Posterior vena cava (tissue), 2 donors: ENCODE measurements at regions of chr10 and their contacts with region 1.

Region 1: DNA sequence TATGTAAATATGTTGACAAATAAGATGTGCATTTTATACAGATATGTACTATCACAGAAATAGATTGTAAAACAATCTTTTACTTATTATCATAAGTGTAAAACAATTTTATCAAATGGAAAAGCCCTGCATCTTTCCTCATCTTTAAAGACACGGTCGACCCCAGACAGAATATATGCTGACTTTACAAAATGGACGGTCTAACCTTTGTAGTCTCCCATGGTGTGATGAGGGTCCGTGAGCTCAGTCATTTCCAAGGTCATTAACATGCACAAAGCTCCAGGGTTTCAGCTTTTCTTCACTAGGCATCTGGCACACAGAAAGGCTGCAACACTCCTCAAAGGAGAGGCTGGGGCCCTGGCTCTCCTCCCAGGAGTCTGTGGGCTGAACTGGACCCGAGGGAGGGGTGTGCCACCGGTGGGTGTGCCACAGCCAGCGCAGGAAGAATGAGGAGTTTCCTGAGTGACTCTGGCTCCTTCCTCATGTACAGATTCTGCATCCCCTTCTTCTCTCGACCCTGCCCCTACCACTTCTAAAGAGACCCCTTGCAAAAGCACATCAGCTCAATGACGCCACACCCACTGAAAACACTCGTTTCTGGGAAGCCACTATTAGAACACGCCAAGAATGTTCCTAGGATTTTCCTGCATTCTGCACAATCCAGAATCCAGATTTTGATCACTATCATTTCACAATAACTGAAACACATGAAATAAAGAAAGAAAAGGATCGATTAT is 26.2 kb upstream of the ABLIM1 start:
- DNase-seq: peak; percentile 81

Region 2: GRCh38 chr10:114304017-114304570 is 380.2 kb before region 1 on chr10:
- intact Hi-C with region 1: no loop called
- DNase-seq: peak; percentile 89

Region 3: DNA sequence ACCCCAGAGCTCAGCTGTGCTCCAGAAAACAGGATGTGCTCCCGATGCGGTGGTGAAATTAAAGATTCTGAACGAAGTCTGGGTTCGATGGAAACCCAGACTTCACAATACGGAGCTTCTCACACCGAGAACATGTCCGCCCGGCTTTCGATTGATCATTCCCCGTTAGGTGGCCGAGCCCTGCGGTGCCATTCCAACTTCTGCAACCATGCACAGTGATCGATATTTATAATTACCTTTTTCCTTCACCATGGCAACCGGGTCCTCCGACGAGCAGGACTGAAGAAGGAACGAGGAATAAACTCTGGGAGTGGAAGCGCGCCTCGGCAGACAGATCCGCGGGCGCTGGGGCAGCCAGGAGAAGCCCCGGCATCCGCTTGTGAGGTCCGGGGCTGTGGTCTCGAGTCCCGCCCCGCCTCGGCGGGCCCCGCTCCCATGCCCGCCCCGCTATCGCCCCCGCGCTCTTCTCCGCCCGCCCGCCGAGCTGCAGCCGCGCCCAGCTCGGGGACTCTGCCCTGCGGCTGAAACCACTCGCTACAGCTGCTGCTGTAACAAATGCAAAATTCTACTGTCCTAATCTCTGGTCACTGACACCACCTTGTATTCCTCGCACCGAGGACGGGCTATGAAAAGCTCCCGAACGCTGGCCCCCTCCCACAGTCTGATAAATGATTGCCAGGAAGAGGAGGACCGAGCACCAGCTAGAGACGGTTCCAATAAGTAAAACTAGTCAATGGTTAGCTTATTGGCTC is 52.4 kb before region 1 on chr10:
- intact Hi-C with region 1: loop called in 1 of 2 experiments (anchors 10 kb)
- DNase-seq: peak; percentile 82

Region 4: DNA sequence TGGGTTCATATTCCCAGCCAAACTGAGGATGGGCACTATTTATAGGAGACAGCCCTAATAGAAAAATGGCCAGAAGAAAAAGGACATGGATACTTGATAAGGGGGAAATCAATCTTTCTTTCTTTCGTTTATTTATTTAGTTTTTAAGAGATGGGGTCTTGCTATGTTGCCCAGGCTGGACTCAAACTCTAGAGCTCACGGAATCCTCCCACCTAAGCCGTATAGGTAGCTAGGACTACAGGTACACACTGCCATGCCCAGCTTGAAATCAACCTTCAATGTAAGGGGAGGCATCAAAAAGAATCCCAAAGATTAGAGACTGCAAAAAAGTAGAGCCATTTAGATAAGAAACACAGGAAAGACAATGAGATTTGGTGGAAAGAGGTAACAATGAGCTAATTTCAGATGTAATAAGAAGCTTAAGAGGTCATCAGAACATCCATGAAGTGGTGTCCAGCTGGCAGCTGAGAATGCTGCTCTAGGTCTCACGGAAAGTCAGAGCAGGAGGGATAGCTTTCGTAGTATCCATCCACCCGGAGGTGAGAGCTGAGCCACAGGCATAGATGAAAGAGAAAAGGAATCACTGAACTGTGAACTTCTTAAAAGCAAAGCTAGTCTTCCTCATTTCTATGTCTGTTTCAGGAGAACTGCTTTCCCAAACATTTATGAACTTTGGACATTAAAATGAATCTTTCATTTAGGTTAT is 15.7 kb before region 1 on chr10:
- intact Hi-C with region 1: no loop called
- DNase-seq: no peak

Region 5: DNA sequence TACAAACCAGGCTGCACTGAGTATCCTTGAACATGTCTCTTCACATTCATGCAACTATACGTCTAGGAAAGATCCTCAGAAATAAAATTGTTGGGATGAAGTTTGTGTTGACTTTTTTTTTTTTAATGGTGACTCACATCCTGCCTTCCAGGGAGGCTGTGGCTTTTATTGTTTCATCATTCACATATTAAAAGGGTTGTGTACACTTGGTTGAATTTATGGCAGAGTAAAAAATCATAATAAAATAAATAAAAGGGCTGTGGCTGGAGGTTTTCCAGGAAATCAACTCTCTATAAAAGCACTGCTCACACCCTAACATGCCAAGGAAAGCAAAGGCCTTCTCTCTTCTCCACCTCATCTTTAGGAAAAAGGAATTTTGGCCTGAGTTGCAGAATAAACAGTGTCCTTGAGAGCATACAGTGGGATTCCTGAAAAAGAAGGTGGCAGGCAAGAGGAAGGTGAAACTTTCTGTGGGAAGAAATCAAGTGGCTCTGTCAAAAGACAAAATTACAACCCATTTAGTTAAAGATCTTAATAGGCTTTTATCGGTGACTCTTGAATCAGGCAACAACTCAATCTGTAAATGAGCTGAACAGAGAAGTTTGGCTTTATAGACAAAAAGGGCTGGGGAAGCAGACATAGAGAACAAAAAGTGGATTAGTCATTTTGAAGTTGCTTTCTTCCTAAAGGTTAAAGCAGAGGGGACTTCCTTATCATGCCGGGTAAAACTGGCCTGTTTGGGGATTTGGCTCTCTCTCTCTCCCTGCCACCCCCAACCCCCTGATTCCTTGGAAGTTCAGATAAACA is 95.8 kb after region 1 on chr10:
- intact Hi-C with region 1: no loop called
- DNase-seq: no peak